A549 (cell line): ENCODE measurements at regions of chr9 and their contacts with region 1.

Region 1: DNA sequence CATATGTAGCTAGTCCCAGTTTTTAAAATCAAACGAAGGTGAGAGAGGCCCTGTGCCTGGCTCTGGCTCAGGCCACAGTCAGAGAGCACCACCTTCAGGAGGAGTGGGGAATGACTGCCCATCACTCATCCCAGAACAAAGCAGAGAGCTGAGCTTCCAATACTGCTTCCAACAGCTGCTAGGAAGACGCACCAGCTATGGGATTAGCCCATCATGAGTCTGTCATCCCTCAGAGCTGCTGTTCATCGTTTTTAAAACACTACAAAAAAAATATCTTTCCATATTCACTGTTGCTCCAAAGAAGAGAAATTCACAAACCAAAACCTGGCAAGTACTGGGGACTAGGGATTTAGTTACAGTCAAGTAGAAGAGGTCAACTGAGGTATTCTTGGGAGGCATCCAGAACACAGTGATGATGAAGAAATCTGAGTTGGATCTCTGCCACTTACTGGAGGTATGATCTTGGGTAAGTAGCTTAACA is 102.4 kb downstream of the CDK5RAP2 start:
- DNase-seq: peak; percentile 54 to 63
- ATAC-seq: peak; percentile 90 to 97
- H3K4me3 ChIP-seq: no peak overlapping the region
- H3K27ac ChIP-seq: peak overlapping the region; percentile 63 to 78; a peak in 5 of 6 replicates
- H3K4me1 ChIP-seq: peaks cover 30% of the 10 kb centered on the region
- CTCF ChIP-seq: peak; percentile 83
- EP300 ChIP-seq: no peak
- POLR2A ChIP-seq: no peak
- RAD21 ChIP-seq: peak; percentile 84 to 85

Region 2: DNA sequence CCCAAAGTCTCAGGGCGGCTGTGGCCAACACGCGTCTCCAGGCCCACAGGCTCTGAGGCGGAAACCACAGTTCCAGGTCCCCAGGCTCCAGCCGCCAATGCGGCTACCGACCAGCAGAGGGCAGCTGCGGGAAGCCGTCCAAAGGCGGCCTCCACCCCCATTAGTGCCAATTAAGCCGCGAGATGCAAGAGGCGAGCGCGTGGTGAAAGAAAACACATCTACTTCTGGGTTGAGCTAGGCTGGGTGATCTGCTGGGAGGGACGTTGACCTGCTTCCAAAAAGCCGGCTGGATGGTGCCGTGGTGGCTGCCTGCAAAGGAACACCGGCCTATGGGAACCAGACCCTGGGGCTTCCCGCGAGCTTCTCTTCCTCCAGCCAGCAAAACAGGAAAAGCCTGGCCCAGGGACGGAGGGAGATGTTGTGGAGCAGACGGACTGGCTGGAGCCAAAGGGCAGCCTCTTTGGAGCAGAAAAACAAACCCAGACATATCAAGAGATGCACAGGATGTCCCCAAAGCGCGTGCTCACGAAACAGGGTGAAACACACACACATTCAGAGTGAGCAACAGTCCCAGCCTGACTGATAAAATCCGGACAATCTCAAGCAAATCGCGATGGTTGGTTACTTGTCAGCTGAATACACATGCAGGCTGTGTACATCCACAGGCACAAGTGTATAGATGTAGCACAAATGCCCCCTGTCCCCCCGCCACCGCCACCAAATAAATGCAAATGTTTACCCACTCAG is 921.3 kb before region 1 on chr9:
- CTCF ChIA-PET with region 1: interaction called, 13 read pairs
- POLR2A ChIA-PET with region 1: no interaction called
- DNase-seq: peak; percentile 31 to 44
- ATAC-seq: peak; percentile 86 to 99
- H3K4me3 ChIP-seq: peak overlapping the region; percentile 29; the same call in 1 of the 3 replicates
- H3K27ac ChIP-seq: peak overlapping the region in 1 of 2 experiments; percentile 40; a peak in 1 of 6 replicates
- H3K4me1 ChIP-seq: no peaks in the 10 kb centered on the region
- CTCF ChIP-seq: peak; percentile 69
- EP300 ChIP-seq: no peak
- POLR2A ChIP-seq: no peak
- RAD21 ChIP-seq: peak; percentile 70

Region 3: DNA sequence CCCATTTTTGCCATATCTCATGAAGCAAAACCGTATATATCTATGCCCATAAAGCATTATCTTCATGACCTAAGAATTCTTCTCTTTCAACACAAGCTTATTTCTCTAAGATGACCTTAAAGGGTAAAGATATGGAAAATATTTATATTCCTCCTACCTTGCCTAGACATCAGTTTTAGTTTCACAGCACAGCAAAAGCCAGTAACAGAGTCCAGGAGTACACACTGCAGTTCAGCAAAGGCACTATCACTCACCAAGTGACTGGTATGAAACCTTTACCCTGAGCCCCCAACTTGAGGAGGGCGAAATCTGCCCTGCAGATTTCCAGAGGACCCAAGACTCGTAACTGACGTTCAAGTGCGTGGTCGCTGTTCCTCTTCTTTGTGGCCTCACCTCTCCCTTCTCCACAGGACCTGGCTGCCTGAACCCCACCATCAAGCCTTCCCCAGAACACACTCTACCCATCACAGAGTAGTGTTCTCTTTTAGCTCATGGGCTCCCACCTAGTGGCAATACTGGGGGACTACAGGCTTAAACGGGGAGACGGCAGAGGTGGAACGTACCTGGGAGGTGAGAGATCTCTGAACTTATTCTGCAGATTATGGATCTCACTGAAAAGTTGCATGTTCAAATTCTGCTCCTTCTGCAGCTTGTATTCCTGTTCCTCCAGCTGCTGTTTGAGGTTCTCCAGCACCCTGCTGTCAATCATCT is 38.6 kb before region 1 on chr9:
- CTCF ChIA-PET with region 1: interaction called, 11 read pairs
- POLR2A ChIA-PET with region 1: no interaction called
- DNase-seq: peak; percentile 38 to 40
- ATAC-seq: peak; percentile 80 to 92; a peak in 5 of 6 replicates
- H3K4me3 ChIP-seq: no peak overlapping the region
- H3K27ac ChIP-seq: no peak overlapping the region
- H3K4me1 ChIP-seq: no peaks in the 10 kb centered on the region
- CTCF ChIP-seq: peak; percentile 39
- EP300 ChIP-seq: no peak
- POLR2A ChIP-seq: no peak
- RAD21 ChIP-seq: peak; percentile 40 to 68; a peak in 3 of 5 replicates

Region 4: DNA sequence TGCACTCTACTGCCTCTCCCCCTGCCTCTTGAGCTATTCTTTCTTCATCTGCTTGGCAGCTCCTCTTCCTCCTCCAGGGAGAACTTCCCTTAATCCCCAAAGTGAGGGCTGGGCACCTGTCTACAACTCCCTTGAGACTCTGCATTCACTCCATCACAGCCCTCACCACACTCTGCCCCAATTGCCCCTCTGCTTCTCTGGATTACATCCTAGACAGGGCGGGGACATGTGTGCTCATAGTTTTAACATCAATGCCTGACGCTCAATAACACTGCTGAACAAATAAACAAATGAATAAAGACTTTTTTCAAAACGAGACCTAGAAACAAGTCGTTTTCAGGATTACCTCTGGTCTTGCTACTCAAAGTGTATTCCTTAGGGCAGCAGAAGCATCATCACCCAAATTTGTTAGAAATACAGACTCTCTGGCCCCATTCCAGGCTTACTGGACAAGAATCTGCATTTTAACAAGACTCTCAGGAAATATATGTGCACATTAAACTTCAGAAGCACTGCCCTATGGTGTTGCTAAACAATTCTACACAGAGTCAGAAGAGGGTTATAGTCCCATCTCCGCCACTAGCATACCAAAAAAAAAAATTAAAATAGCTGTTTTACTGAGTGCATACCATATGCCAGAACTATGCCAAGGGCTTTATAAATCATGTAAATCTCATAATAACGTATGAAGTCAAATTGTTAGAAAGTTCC is 13.2 kb before region 1 on chr9:
- CTCF ChIA-PET with region 1: interaction called, 15 read pairs
- POLR2A ChIA-PET with region 1: no interaction called
- DNase-seq: no peak
- ATAC-seq: no peak
- H3K4me3 ChIP-seq: no peak overlapping the region
- H3K27ac ChIP-seq: no peak overlapping the region
- H3K4me1 ChIP-seq: no peaks in the 10 kb centered on the region
- CTCF ChIP-seq: no peak
- EP300 ChIP-seq: no peak
- POLR2A ChIP-seq: no peak
- RAD21 ChIP-seq: no peak

Region 5: DNA sequence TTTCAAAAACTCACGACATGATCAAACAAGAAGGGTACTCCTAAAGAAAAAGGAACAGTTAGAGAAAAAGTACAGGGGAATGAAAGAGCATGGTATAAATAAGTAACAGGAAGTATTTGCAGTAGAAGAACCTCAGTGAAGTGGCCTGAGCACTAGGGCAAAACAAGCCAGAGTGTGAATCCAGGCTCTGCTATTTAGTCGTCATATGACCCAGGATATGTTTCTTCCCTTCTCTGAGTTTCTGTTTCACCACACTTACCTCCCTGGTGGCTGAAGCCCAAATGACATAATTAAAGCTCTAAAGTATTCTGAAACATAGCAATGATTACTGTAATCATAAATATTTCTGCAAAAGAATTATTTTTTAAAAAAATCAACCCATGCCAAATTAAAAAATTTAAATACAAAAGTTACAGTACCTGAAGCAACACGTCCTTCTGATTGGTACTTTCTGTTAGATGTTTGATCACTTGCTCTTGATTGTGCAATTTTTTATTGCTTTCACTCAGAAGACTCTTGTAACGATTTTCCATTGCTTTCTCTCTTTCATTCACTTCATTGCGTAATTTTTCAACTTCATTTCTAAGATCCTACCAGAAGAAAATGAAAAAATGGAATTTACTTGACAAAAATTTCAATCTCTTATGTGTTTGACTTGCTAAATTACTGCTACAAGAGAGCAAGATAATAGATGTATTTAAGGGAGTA is 13.5 kb after region 1 on chr9:
- CTCF ChIA-PET with region 1: interaction called, 14 read pairs
- POLR2A ChIA-PET with region 1: no interaction called
- DNase-seq: no peak
- ATAC-seq: no peak
- H3K4me3 ChIP-seq: no peak overlapping the region
- H3K27ac ChIP-seq: no peak overlapping the region
- H3K4me1 ChIP-seq: peaks cover 10% of the 10 kb centered on the region
- CTCF ChIP-seq: no peak
- EP300 ChIP-seq: no peak
- POLR2A ChIP-seq: no peak
- RAD21 ChIP-seq: no peak

Region 6: GRCh38 chr9:120505186-120505585 is 27.6 kb after region 1 on chr9:
- CTCF ChIA-PET with region 1: interaction called, 13 read pairs
- POLR2A ChIA-PET with region 1: no interaction called
- DNase-seq: no peak
- ATAC-seq: no peak
- H3K4me3 ChIP-seq: no peak overlapping the region
- H3K27ac ChIP-seq: no peak overlapping the region
- H3K4me1 ChIP-seq: no peaks in the 10 kb centered on the region
- CTCF ChIP-seq: no peak
- EP300 ChIP-seq: no peak
- POLR2A ChIP-seq: no peak
- RAD21 ChIP-seq: 0 out of 5 replicates have a peak, but pooled peaks of 1 of the 2 experiments have one; percentile 8

Region 7: DNA sequence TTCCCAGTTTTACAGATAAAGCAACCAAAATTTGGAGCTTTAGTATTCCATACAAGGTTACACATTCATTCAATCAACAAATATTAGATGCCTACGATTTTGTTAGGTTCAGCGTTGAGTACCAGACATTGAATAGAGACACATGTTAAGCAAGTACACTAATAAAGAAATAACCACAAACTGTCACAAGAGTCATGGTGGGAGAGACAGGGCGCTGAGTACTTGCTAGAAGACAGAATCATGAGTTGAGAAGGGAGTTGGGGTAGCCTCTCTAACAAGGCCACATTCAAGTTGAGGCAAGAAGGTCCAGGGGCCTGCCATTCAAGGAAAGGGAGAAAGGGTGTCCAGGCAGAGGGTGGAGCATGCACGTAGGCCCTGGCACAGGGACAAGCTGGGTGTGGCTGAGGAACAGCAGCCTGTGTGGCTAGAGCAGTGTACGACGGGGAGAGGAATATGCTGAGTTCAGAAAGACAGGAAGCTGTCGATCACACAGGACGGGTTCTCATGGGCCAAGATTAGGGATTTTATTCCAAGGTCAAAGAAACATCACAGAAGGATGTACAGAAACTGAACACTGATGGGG is 85.4 kb after region 1 on chr9:
- CTCF ChIA-PET with region 1: no interaction called
- POLR2A ChIA-PET with region 1: no interaction called
- DNase-seq: no peak
- ATAC-seq: no peak
- H3K4me3 ChIP-seq: no peak overlapping the region
- H3K27ac ChIP-seq: no peak overlapping the region
- H3K4me1 ChIP-seq: no peaks in the 10 kb centered on the region
- CTCF ChIP-seq: no peak
- EP300 ChIP-seq: no peak
- POLR2A ChIP-seq: no peak
- RAD21 ChIP-seq: no peak

Region 8: GRCh38 chr9:120820095-120820494 is 342.5 kb after region 1 on chr9:
- CTCF ChIA-PET with region 1: no interaction called
- POLR2A ChIA-PET with region 1: no interaction called
- DNase-seq: no peak
- ATAC-seq: no peak
- H3K4me3 ChIP-seq: no peak overlapping the region
- H3K27ac ChIP-seq: no peak overlapping the region
- H3K4me1 ChIP-seq: no peaks in the 10 kb centered on the region
- CTCF ChIP-seq: no peak
- EP300 ChIP-seq: no peak
- POLR2A ChIP-seq: no peak
- RAD21 ChIP-seq: no peak